Psoas muscle (tissue), 8 donors: ENCODE measurements at regions of chrX and their contacts with region 1.

Region 1: GRCh38 chrX:21756785-21757529 is 959 bp downstream of the SMPX start:
- DNase-seq: no peak
- ATAC-seq: peak; percentile 87 to 91 (median 90)
- H3K4me3 ChIP-seq: peak overlapping the region; percentile 67
- H3K27ac ChIP-seq: peak overlapping the region; percentile 89
- H3K4me1 ChIP-seq: peaks cover 9% of the 10 kb centered on the region
- H3K27me3 ChIP-seq: peaks cover 0 to 5% (median 0%) of the 10 kb centered on the region in 3 donors
- CTCF ChIP-seq: no peak

Region 2: DNA sequence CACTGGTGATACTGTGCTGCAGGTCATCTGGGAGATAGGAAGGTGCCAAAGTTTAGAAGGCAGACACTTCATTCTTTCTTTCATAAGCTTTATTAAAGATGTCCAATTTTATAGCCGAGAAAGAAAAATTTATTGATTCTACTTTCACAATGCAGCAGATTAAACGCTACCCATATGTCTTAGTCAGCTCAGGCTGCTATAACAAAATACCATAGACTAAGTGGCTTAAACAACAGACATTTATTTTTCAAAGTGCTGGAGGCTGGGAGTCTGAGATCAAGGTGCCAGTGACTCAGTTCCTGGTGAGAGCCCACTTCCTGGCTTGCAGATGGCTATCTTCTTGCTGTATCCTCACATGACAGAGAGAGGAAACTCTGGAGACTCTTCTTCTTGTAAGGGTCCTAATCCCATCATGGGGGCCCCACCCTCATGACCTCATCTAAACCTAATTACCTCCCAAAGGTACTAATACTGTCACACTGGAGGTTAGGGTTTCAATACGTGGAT is 65.4 kb before region 1 on chrX:
- intact Hi-C with region 1: no loop called
- DNase-seq: no peak
- ATAC-seq: no peak
- H3K4me3 ChIP-seq: no peak overlapping the region
- H3K27ac ChIP-seq: no peak overlapping the region
- H3K4me1 ChIP-seq: no peaks in the 10 kb centered on the region
- H3K27me3 ChIP-seq: no peaks in the 10 kb centered on the region
- CTCF ChIP-seq: no peak

Region 3: DNA sequence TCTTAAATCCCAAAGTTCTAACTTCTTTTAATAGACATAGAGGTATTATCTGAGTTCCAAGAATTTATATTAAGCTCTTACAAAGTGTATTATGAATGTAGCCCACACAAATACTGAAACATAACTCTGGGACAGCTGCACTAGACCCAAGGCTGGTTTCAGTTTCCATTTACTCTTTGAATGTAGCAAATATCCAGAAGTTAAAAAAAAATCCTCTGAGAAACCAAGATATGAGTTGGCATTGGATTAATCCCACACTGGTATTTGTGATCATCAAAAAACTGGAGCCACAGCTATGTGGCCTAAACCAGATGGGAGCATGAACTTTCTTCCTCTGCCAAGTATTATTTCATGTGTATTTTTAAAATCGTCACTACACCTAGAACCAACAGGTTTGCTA is 24.6 kb after region 1 on chrX:
- intact Hi-C with region 1: loop called in 1 of 2 experiments (anchors 1 kb)
- DNase-seq: no peak
- ATAC-seq: peak; percentile 77 to 84 (median 80)
- H3K4me3 ChIP-seq: no peak overlapping the region
- H3K27ac ChIP-seq: peak overlapping the region; percentile 81
- H3K4me1 ChIP-seq: peaks cover 7% of the 10 kb centered on the region
- H3K27me3 ChIP-seq: no peaks in the 10 kb centered on the region
- CTCF ChIP-seq: no peak

Region 4: GRCh38 chrX:21839334-21840192 is 82.6 kb after region 1 on chrX and contains the start of gene MBTPS2:
- intact Hi-C with region 1: loop called in 1 of 2 experiments (anchors 5 kb)
- DNase-seq: peak; percentile 81 to 89
- ATAC-seq: peak; percentile 93 to 95 (median 94)
- H3K4me3 ChIP-seq: peak within 1 kb of the TSS; percentile 76
- H3K27ac ChIP-seq: peak within 1 kb of the TSS; percentile 89
- H3K4me1 ChIP-seq: no peaks in the 10 kb centered on the region
- H3K27me3 ChIP-seq: no peaks in the 10 kb centered on the region
- CTCF ChIP-seq: no peak
- total RNA-seq, gene MBTPS2: 12.0 to 14.6 (median 13.2) TPM